ENCODE measurements at regions of chr2 and their contacts with region 1.

Region 1: DNA sequence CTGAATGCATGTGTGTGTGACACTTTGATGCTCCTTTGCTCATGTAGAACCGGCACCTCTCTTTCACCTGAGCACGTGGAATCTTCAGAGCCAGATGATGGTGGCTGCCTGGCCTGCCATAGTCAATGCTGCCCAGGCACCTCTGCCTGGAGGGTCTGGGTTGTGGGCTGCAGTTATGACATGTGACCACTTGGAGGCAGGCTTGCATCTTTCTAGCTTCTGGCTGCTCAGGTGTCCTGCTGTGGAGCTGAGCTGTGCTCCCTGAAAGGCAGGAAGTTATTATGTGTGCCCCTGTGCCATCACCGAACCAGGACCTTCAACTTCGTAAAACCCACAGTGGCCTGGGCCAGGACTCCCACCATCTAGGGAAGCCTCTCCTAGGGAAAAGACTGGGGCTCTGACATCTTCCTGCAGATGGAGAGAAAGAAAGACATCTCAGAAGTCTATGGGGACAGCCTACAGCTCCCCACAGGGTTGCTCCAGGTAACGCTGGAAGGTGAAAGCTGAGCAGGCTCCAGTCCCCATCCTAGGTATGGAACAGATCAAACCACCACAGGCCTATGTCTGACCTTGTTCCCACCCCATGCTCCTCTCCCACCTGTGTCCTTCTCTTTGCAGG is 30.2 kb downstream of the PSD4 start:
- DNase-seq: peak; percentile 86
- ATAC-seq: peak; percentile 80
- H3K4me3 Mint-ChIP-seq: no peak overlapping the region
- H3K27ac Mint-ChIP-seq: peak overlapping the region; percentile 78
- H3K4me1 Mint-ChIP-seq: peaks cover 20% of the 10 kb centered on the region
- H3K27me3 Mint-ChIP-seq: no peaks in the 10 kb centered on the region

Region 2: GRCh38 chr2:113025737-113026136 is 178.3 kb before region 1 on chr2:
- CTCF ChIA-PET with region 1: no interaction called
- POLR2A ChIA-PET with region 1: no interaction called
- DNase-seq: no peak
- ATAC-seq: no peak
- H3K4me3 Mint-ChIP-seq: no peak overlapping the region
- H3K27ac Mint-ChIP-seq: no peak overlapping the region
- H3K4me1 Mint-ChIP-seq: no peaks in the 10 kb centered on the region
- H3K27me3 Mint-ChIP-seq: peaks cover 42% of the 10 kb centered on the region

Region 3: GRCh38 chr2:113089916-113090315 is 114.1 kb before region 1 on chr2:
- CTCF ChIA-PET with region 1: interaction called, 17 read pairs
- POLR2A ChIA-PET with region 1: no interaction called
- DNase-seq: no peak
- ATAC-seq: no peak
- H3K4me3 Mint-ChIP-seq: no peak overlapping the region
- H3K27ac Mint-ChIP-seq: no peak overlapping the region
- H3K4me1 Mint-ChIP-seq: no peaks in the 10 kb centered on the region
- H3K27me3 Mint-ChIP-seq: peaks cover 9% of the 10 kb centered on the region

Region 4: GRCh38 chr2:113181258-113182051 is 22.6 kb before region 1 on chr2:
- CTCF ChIA-PET with region 1: interaction called, 30 read pairs
- POLR2A ChIA-PET with region 1: interaction called, 4 read pairs
- DNase-seq: peak; percentile 56
- ATAC-seq: peak; percentile 43
- H3K4me3 Mint-ChIP-seq: peak overlapping the region; percentile 83
- H3K27ac Mint-ChIP-seq: peak overlapping the region; percentile 83
- H3K4me1 Mint-ChIP-seq: peaks cover 93% of the 10 kb centered on the region
- H3K27me3 Mint-ChIP-seq: no peaks in the 10 kb centered on the region

Region 5: DNA sequence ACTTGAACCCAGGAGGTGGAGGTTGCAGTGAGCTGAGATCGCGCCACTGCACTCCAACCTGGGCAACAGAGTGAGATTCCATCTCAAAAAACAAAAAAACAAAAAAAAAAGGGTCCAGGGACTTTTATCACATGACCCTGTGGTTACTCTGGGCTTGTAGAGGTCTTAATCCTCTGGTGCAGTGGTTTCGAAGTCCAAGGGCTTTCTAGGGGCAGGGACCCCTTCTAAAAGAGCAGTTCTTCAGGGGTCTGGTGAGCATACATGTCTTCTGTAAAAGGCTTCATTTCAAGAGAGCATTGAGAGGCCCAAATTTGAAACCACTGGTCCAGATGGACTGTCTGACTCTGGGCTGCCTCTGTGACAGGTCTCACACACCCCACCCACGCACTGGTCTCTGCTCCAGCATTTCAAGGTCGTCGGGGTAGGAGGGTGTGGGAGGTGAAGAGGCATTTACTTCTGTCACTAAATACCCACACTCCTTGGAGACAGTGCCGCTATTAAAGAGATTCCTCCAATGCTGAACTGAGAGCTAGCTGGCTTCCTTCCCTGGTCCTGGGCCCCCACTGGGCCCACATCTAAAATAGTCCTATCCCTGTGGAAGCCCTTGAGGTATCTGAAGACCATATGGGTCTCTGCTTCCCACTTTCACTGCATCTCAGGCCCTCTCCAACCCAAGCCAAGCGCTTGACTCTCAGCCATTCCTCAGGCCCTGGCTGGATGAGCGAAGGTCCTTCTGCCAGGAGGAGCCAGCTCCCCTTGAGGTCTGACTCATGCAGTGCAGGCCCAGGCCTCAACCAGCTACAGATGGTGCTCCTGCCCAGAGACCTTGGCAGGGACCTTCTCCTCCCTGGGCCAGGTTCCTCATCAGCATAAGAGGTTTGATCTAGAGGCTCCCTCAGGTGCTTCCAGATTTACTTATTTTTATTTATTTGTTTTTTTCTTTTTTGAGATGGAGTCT is 29.9 kb after region 1 on chr2:
- CTCF ChIA-PET with region 1: interaction called, 12 read pairs
- POLR2A ChIA-PET with region 1: interaction called, 5 read pairs
- DNase-seq: no peak
- ATAC-seq: no peak
- H3K4me3 Mint-ChIP-seq: no peak overlapping the region
- H3K27ac Mint-ChIP-seq: no peak overlapping the region
- H3K4me1 Mint-ChIP-seq: peaks cover 33% of the 10 kb centered on the region
- H3K27me3 Mint-ChIP-seq: peaks cover 2% of the 10 kb centered on the region

Region 6: DNA sequence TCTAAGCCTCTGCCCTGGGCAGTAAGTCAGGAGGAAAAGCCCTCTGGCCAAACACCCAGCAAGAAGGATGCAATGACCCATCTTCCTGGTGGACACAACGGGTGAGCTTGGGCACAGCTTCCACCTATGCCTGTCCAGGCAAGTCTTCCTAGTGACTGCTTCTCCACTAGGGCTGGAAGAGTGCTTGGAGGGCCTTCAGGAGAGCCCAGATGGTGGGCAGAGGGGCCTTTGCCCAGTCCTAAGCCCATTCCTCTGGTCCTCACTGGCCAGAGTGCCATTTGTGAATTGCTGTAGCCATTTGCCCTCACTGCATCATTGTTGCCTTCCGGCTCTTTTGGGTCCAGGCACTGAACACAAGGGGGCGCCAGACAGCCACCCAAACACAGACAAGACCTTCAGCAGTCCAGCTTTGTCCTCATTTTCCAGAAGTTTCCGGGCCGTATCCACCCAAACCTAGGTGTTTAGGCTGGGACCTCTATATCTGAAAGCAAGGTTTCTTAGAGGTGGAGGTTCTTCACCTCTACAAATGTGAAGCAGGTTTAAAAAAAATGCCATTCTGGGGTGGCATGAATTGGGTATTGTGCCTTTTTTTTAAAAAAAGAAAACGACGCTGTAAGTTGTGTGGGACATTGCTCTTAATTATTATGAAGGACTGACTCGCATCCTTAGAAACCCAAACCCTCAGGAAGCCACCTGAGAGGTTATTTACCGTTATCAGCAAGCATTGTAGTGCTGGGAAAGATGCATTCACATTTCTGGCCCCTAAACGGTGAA is 45.2 kb after region 1 on chr2:
- CTCF ChIA-PET with region 1: interaction called, 91 read pairs
- POLR2A ChIA-PET with region 1: no interaction called
- DNase-seq: peak; percentile 86
- ATAC-seq: peak; percentile 69
- H3K4me3 Mint-ChIP-seq: no peak overlapping the region
- H3K27ac Mint-ChIP-seq: peak overlapping the region; percentile 77
- H3K4me1 Mint-ChIP-seq: peaks cover 56% of the 10 kb centered on the region
- H3K27me3 Mint-ChIP-seq: no peaks in the 10 kb centered on the region

Region 7: DNA sequence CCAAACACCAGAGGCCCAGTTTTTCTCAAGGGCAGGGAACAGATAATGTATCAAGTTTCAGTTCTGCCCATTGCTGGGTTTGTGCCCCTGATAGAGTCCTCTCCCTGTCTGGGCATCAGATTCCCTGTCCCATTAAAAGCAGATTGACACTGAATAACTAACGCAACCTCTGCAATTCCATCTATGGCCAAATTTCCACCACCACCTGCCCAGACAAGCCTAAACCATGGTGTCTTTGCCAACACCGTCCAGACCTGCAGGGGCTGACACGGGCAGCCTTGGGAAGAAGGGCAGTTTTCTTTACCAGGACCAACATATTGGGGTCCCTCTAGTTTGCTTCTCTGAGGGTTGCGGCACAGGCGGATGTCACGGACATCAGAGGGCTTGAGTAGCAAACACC is 101.1 kb after region 1 on chr2:
- CTCF ChIA-PET with region 1: no interaction called
- POLR2A ChIA-PET with region 1: no interaction called
- DNase-seq: no peak
- ATAC-seq: no peak
- H3K4me3 Mint-ChIP-seq: no peak overlapping the region
- H3K27ac Mint-ChIP-seq: no peak overlapping the region
- H3K4me1 Mint-ChIP-seq: no peaks in the 10 kb centered on the region
- H3K27me3 Mint-ChIP-seq: peaks cover 27% of the 10 kb centered on the region

Region 8: DNA sequence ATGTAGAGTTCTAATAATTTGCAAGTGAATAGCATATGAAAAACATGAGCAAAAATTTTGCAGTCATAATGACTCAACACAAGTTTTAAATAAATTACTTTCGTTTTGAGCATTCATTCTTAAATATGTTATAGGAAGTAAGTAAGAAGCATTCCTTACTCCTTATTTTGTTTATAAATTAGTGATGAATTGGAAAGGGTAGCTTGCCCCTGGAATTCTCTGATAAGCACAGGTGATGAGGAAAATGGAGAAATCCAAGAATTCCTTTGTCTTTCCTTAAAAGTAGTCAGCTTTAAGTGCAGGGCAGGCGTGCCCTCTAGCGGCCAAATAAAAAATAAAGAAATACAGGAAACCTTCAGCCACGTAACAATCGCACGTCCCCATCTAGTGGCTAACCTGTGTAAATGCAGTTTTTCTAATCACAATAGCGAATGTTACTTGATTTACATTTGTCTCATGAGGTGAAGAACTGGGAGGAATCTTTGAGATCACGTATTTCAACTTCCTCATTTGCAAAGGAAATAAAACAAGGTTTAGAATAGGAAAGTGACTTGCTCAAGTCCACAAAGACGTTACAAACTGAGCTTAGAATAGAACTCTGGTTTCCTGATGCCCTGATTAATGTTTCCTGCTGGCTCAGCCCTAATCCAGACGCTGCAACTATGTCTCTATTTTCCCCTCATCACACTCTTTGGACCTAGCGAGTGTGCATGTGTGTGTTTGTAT is 186.3 kb after region 1 on chr2:
- CTCF ChIA-PET with region 1: interaction called, 31 read pairs
- POLR2A ChIA-PET with region 1: no interaction called
- DNase-seq: peak; percentile 73
- ATAC-seq: peak; percentile 90
- H3K4me3 Mint-ChIP-seq: peak overlapping the region; percentile 74
- H3K27ac Mint-ChIP-seq: peak overlapping the region; percentile 82
- H3K4me1 Mint-ChIP-seq: peaks cover 15% of the 10 kb centered on the region
- H3K27me3 Mint-ChIP-seq: peaks cover 20% of the 10 kb centered on the region